IMR-90 (cell line): ENCODE measurements at regions of chr3 and their contacts with region 1.

Region 1: DNA sequence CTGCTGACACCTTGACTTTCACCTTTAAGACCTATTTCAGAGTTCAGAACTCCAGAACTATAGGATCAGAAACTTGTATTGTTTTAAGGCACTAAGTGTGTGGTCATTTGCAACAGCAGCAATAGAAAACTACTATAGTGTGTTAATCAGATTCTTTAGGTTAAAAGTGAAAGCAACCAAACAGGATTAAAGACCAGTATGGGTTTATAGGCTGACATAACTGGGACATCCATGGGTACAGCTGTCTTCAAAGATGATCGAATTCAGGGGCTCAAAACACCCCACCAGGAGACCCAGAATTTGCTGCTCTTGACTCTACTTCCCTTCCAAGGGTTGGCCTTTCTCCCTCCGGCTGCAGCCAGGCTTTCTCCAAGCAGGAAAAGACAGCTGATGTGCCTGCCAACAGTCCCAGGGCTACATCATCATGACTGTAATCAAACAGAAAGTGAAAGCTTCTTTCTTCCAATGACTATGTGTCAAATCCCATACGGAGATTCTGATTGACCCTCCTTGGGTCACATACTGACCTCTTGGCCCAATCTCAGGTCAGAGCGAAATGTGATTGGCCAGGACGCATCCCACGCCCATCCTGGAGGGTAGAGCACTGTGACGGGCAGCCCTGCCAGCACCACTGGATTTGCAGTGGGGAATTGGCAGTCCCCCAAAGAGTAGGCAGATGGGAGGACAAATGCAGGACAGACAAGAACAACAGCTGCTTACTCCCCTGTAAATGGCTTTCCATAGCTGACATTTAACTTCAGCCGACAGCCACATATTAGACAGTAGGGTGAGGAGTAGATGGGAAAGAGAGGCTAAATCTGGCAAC is 51.4 kb upstream of the RNF7 start:
- DNase-seq: peak; percentile 72
- ATAC-seq: peak; percentile 74
- H3K4me3 ChIP-seq: peak overlapping the region; percentile 44
- H3K27ac ChIP-seq: peak overlapping the region; percentile 65; the same call in 1 of the 2 replicates
- H3K4me1 ChIP-seq: peaks cover 14% of the 10 kb centered on the region
- H3K27me3 ChIP-seq: no peaks in the 10 kb centered on the region
- CTCF ChIP-seq: no peak
- POLR2A ChIP-seq: no peak
- RAD21 ChIP-seq: no peak

Region 2: GRCh38 chr3:141707741-141708203 is 21.1 kb after region 1 on chr3:
- CTCF ChIA-PET with region 1: interaction called, 5 read pairs
- POLR2A ChIA-PET with region 1: no interaction called
- dilution Hi-C with region 1: no loop called
- in situ Hi-C with region 1: no loop called
- intact Hi-C with region 1: loop called (anchors 2 kb)
- DNase-seq: peak; percentile 64
- ATAC-seq: peak; percentile 77
- H3K4me3 ChIP-seq: no peak overlapping the region
- H3K27ac ChIP-seq: peak overlapping the region; percentile 96
- H3K4me1 ChIP-seq: peaks cover 14% of the 10 kb centered on the region
- H3K27me3 ChIP-seq: no peaks in the 10 kb centered on the region
- CTCF ChIP-seq: no peak
- POLR2A ChIP-seq: no peak
- RAD21 ChIP-seq: no peak

Region 3: DNA sequence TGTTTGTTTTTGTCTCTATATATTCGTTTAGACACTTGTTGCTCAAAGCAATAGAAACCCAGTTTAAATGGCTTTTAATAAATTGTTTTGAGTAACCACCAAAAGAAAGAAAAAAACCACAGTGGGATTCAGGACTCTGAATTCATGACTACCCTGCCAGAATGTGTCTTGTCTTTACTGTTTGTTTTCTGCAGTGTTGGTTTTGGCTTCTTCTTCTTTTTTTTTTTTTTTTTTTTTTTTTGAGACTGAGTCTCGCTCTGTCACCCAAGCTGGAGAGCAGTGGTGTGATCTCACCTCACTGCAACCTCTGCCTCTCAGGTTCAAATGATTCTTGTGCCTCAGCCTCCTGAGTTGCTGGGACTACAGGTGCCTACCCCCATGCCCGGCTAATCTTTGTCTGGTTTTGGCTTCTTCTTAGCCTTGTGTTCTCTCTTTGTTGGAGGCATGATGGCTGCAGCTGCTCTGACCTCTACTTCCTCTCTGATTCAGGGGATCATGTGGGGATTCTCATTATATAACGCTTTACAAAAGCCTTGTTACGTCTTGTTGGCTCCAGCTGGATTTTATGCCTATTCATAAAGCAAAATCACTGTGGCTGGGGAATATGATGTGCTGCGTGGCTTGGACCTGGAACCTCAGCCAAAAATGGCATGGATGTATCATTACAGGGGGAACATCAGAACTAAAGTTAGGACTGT is 963.5 kb after region 1 on chr3:
- CTCF ChIA-PET with region 1: no interaction called
- POLR2A ChIA-PET with region 1: no interaction called
- dilution Hi-C with region 1: no loop called
- in situ Hi-C with region 1: no loop called
- intact Hi-C with region 1: no loop called
- DNase-seq: no peak
- ATAC-seq: no peak
- H3K4me3 ChIP-seq: no peak overlapping the region
- H3K27ac ChIP-seq: no peak overlapping the region
- H3K4me1 ChIP-seq: no peaks in the 10 kb centered on the region
- H3K27me3 ChIP-seq: no peaks in the 10 kb centered on the region; the same call in 1 of the 2 replicates
- CTCF ChIP-seq: no peak
- POLR2A ChIP-seq: no peak
- RAD21 ChIP-seq: no peak